A549 (cell line): ENCODE measurements at regions of chr12 and their contacts with region 1.

Region 1: DNA sequence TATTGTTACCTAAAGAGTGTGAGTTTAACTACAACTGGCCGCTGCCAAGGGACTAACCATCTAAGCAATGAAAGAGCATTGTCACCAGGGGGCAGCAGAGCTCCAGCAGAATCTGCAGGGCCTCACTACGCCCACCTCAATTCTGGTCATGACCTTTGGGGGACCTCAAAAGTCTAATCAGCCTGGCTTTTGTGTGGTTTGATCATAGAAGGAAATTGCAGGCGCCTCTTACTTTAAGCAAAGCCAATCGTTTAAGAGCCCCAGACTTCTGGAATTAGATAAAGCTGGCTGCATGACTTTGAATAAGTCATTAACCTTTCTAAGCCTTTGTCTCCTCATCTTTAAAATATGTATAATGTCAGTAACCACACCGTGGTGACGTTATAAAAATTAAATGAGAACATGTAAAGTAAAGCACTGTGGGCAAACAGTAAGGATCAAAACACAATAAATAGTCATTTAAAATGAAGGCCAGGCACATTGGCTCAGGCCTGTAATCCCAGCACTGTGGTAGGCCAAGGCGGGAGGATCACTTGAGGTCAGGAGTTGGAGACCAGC is 58.6 kb downstream of the TBX3 start:
- DNase-seq: peak; percentile 65 to 90
- ATAC-seq: peak; percentile 93 to 96
- H3K4me3 ChIP-seq: no peak overlapping the region
- H3K27ac ChIP-seq: peak overlapping the region; percentile 72 to 75
- H3K4me1 ChIP-seq: peaks cover 43% of the 10 kb centered on the region
- CTCF ChIP-seq: peak; percentile 86
- EP300 ChIP-seq: peak; percentile 63 to 86; a peak in 4 of 5 replicates
- POLR2A ChIP-seq: no peak
- RAD21 ChIP-seq: peak; percentile 94

Region 2: GRCh38 chr12:114547636-114548035 is 77.7 kb before region 1 on chr12:
- CTCF ChIA-PET with region 1: no interaction called
- POLR2A ChIA-PET with region 1: no interaction called
- DNase-seq: no peak
- ATAC-seq: peak; percentile 19 to 30; a peak in 1 of 6 replicates
- H3K4me3 ChIP-seq: no peak overlapping the region
- H3K27ac ChIP-seq: no peak overlapping the region
- H3K4me1 ChIP-seq: no peaks in the 10 kb centered on the region
- CTCF ChIP-seq: no peak
- EP300 ChIP-seq: no peak
- POLR2A ChIP-seq: no peak
- RAD21 ChIP-seq: no peak

Region 3: GRCh38 chr12:114604606-114605005 is 20.8 kb before region 1 on chr12:
- CTCF ChIA-PET with region 1: interaction called, 13 read pairs
- POLR2A ChIA-PET with region 1: no interaction called
- DNase-seq: no peak
- ATAC-seq: no peak
- H3K4me3 ChIP-seq: no peak overlapping the region
- H3K27ac ChIP-seq: no peak overlapping the region
- H3K4me1 ChIP-seq: no peaks in the 10 kb centered on the region
- CTCF ChIP-seq: no peak
- EP300 ChIP-seq: no peak
- POLR2A ChIP-seq: no peak
- RAD21 ChIP-seq: no peak

Region 4: GRCh38 chr12:114636723-114637483 is 11.5 kb after region 1 on chr12:
- CTCF ChIA-PET with region 1: interaction called, 51 read pairs
- POLR2A ChIA-PET with region 1: no interaction called
- DNase-seq: peak; percentile 48 to 58
- ATAC-seq: peak; percentile 81 to 83
- H3K4me3 ChIP-seq: no peak overlapping the region
- H3K27ac ChIP-seq: peak overlapping the region; percentile 43 to 76
- H3K4me1 ChIP-seq: peaks cover 11% of the 10 kb centered on the region; the same call in 1 of the 3 replicates
- CTCF ChIP-seq: peak; percentile 51
- EP300 ChIP-seq: no peak
- POLR2A ChIP-seq: no peak
- RAD21 ChIP-seq: peak; percentile 29 to 44; a peak in 3 of 5 replicates

Region 5: DNA sequence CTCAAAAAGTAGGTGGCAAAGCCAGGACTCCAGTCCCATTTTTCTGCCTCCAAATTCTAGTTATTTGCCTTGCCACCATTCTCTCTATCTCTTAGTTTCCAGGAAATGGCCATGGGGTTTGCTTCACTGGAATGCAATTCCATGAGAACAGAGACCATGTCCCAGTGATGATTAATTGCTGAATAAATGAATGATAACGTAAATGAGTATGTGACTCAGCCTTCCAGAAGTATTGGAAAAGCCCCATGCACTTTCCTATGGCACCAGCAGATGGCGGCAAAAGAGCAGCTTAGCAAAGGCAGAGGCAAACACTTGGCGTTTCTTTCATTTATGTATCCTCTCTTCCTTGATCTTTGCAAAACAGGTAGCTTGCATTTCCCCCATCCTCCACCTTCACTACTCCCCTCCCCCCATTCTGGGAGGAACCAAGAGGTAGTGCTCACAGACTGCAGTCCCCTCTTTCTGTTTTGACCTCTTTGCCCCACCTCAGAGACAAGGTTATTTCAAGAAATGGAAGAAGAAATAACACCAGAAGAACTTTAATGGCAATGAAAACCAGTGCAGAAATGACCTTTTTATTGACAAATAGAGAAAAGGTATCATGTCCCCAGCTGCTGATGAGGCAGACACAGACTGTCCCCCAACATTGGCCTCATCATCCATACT is 37.3 kb after region 1 on chr12:
- CTCF ChIA-PET with region 1: interaction called, 36 read pairs
- POLR2A ChIA-PET with region 1: no interaction called
- DNase-seq: peak; percentile 76 to 90
- ATAC-seq: peak; percentile 73 to 79
- H3K4me3 ChIP-seq: no peak overlapping the region
- H3K27ac ChIP-seq: peak overlapping the region; percentile 83 to 85
- H3K4me1 ChIP-seq: peaks cover 38% of the 10 kb centered on the region
- CTCF ChIP-seq: peak; percentile 95
- EP300 ChIP-seq: peak; percentile 52 to 54; a peak in 3 of 5 replicates
- POLR2A ChIP-seq: no peak
- RAD21 ChIP-seq: peak; percentile 97 to 99

Region 6: DNA sequence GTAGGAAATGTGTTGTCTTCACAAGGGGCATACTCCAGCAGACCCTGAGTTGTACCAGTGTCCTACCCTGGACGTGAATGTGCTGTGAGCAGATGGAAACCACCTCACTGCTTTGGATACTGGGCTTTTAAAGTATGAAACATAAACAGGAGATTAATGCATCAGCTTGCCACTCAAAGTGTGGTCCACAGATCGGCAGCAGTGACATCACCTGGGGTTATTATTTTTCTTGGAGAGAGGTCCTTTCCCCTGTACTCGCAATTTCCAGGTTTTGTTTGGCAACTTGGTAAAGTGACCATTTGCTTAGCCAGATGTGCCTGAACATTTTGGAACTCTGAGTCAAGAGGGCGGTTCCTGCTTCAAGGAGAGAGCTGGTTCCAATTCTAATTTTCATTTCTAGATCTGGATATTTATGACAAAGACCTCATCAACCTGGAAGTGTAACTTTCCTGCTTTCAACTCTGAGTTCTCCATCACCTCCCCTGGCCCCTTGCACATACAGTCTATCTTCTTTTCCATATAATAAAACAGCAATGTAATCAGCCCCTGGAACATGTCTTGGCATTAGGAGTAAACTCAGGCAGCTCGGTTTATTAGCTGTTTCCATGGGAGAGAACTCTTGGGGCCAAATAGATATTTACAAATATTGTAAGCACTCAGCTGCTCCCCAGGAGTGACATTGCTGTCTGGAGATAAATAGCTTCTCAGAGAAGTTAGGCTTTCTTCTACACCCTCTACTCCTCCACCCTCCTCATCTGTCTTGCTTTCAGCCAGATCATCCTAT is 295.6 kb after region 1 on chr12:
- CTCF ChIA-PET with region 1: no interaction called
- POLR2A ChIA-PET with region 1: no interaction called
- DNase-seq: no peak
- ATAC-seq: no peak
- H3K4me3 ChIP-seq: no peak overlapping the region
- H3K27ac ChIP-seq: peak overlapping the region; percentile 77 to 86; a peak in 5 of 6 replicates
- H3K4me1 ChIP-seq: peaks cover 54% of the 10 kb centered on the region
- CTCF ChIP-seq: no peak
- EP300 ChIP-seq: no peak
- POLR2A ChIP-seq: no peak
- RAD21 ChIP-seq: no peak

Region 7: GRCh38 chr12:115752913-115753726 is 1127.7 kb after region 1 on chr12:
- CTCF ChIA-PET with region 1: interaction called, 18 read pairs
- POLR2A ChIA-PET with region 1: no interaction called
- DNase-seq: peak; percentile 58 to 74
- ATAC-seq: peak; percentile 98
- H3K4me3 ChIP-seq: no peak overlapping the region
- H3K27ac ChIP-seq: peak overlapping the region in 1 of 2 experiments; percentile 7; a peak in 1 of 6 replicates
- H3K4me1 ChIP-seq: peaks cover 7% of the 10 kb centered on the region; the same call in 2 of the 3 replicates
- CTCF ChIP-seq: peak; percentile 82
- EP300 ChIP-seq: no peak
- POLR2A ChIP-seq: no peak
- RAD21 ChIP-seq: peak; percentile 92 to 94